Caco-2 (cell line): ENCODE measurements at regions of chr2 and their contacts with region 1.

Region 1: DNA sequence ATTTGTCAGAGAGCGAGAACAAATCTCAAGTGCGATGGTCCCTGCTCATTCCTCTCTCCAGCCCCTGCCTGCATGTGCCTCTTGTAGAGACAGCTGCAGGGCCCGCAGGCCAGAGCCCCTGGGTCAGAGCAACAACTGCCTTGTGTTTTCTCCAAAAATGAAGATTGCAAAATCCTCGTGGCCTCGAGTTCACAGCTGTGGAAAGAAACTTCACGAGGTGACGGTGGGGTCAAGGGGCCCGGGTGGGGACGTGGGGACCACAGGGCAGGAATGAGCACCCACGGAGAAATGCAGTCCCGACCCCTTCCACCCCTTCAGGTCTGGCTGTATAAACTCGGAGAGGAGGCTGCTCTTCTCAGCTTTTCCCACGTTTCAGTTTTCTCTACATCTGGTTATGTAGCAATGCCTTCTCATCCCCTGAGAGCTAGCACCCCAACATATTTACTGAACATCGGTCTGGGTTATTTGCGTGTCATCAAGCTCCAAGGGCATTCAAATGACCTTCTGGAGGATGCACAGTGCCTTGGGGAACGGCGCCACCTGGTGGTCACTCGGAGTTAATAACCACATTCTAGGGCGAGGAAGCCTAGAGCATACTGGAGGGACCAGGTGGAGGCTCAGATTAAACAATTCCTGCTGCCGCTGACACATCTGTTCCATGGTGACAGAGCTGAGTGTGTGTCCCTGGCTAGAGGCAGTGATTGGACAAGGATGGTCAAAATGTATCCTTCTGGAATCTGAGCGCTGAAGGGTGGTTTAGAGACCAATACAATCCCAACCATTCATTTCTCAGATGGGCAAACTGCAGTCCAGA is 91.4 kb upstream of the CYRIA start:
- DNase-seq: peak; percentile 67 to 80
- H3K4me3 ChIP-seq: no peak overlapping the region
- H3K4me3 Mint-ChIP-seq: no peak overlapping the region
- H3K27ac Mint-ChIP-seq: no peak overlapping the region
- H3K4me1 ChIP-seq: no peaks in the 10 kb centered on the region
- H3K4me1 Mint-ChIP-seq: peaks cover 5% of the 10 kb centered on the region
- H3K27me3 ChIP-seq: no peaks in the 10 kb centered on the region
- H3K27me3 Mint-ChIP-seq: peaks cover 17% of the 10 kb centered on the region
- CTCF ChIP-seq: peak; percentile 85 to 97

Region 2: DNA sequence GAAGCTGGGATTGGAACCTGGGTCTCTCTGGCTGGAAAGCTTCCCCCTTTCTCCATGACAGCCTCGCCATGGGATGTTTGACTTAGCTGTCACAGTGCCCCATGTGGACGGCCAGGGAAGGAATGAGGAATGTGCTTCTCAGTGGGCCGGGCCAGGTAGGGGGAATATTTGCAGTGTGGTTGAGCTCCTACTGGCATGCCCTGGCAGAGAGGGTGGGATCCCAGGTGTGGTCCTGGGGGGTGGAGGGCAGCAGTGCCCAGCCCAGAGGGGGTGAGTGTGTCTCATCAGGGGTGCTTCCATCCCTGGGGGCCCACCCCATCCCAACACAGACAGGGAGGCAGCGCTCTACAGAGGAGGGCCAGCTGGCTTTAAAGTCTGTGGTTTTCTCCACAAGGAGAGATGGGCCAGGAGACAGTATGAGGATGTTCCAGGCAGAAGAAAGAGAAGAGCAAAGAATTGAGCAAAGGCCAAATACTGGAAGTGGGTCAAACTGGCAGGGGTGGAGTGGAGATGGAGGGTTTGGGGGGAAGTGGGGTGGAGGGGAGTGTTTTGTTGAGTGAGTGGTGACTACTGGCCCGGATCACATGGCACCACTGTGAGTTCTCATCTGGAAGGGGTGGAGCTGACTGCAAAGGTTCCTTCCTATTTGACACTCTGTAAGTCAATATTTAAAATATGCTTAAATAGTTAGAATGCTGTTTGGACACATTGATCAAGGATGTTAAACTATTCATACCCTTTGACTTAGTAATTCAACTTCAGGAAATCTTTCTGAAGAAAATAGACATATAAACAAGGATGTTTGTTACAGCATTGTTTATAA is 722.7 kb before region 1 on chr2:
- CTCF ChIA-PET with region 1: no interaction called
- POLR2A ChIA-PET with region 1: no interaction called
- intact Hi-C with region 1: loop called (anchors 10 kb)
- DNase-seq: peak in 1 of 2 experiments; percentile 19
- H3K4me3 ChIP-seq: no peak overlapping the region
- H3K4me3 Mint-ChIP-seq: no peak overlapping the region
- H3K27ac Mint-ChIP-seq: no peak overlapping the region
- H3K4me1 ChIP-seq: 0 out of 2 replicates have a peak, but pooled peaks cover 6% of the 10 kb centered on the region
- H3K4me1 Mint-ChIP-seq: peaks cover 13% of the 10 kb centered on the region
- H3K27me3 ChIP-seq: no peaks in the 10 kb centered on the region
- H3K27me3 Mint-ChIP-seq: no peaks in the 10 kb centered on the region
- CTCF ChIP-seq: peak in 1 of 2 experiments; percentile 29

Region 3: DNA sequence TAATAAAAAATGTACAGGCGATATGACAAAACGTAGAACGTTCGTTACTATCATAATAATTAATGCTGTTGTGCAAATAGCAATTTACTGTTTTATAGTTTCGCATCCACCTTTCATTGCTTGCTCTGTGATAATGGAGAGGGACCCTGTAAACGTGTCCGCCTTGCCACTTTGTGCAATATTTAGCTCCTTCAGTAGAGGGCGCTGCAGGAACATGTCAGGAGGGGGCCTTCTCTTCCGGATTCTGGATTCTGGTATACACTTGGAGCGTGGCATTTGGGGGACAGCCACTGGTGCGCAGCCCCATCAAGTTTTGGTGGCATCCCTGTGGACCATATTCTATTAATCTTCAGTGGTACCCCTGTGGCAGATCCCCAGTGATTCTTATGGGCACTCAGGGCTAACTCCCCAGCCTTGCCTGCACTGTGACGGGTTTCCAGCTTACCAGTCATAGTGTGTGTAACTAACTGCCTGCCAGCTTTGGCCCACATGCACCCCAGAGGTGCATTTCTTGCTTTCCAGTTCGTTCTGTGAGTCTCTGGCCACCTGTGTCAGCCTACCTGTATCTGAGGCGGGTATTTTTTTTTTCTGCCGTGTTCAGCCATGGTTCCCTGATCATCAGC is 231.7 kb before region 1 on chr2:
- CTCF ChIA-PET with region 1: interaction called, 3 read pairs
- POLR2A ChIA-PET with region 1: no interaction called
- intact Hi-C with region 1: loop called (anchors 5 kb)
- DNase-seq: peak; percentile 62 to 68
- H3K4me3 ChIP-seq: no peak overlapping the region
- H3K4me3 Mint-ChIP-seq: no peak overlapping the region
- H3K27ac Mint-ChIP-seq: no peak overlapping the region
- H3K4me1 ChIP-seq: no peaks in the 10 kb centered on the region
- H3K4me1 Mint-ChIP-seq: no peaks in the 10 kb centered on the region
- H3K27me3 ChIP-seq: no peaks in the 10 kb centered on the region
- H3K27me3 Mint-ChIP-seq: peaks cover 13% of the 10 kb centered on the region
- CTCF ChIP-seq: peak; percentile 58 to 66

Region 4: DNA sequence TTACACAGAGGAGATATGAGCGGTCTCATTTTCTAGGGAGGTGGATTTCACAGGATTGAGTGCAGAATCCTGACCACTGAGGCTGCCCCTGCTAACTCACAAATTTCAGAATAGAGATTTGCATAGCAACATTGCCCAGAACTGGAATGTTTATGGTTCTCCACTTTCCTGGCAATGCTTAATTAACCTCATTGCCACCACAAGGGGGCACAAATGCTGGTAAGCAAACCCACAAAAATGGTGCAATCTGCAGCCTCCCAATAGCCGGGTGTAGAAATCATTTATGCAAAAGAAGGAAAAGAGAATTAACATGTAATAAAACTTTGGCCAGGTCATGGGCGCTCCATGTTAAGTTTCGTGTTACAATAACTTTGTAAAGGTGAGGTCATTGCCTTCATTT is 203.8 kb before region 1 on chr2:
- CTCF ChIA-PET with region 1: no interaction called
- POLR2A ChIA-PET with region 1: no interaction called
- intact Hi-C with region 1: loop called (anchors 2 kb)
- DNase-seq: peak; percentile 51 to 61
- H3K4me3 ChIP-seq: no peak overlapping the region
- H3K4me3 Mint-ChIP-seq: no peak overlapping the region
- H3K27ac Mint-ChIP-seq: no peak overlapping the region
- H3K4me1 ChIP-seq: no peaks in the 10 kb centered on the region
- H3K4me1 Mint-ChIP-seq: no peaks in the 10 kb centered on the region
- H3K27me3 ChIP-seq: no peaks in the 10 kb centered on the region
- H3K27me3 Mint-ChIP-seq: peaks cover 13% of the 10 kb centered on the region
- CTCF ChIP-seq: peak; percentile 63 to 68

Region 5: DNA sequence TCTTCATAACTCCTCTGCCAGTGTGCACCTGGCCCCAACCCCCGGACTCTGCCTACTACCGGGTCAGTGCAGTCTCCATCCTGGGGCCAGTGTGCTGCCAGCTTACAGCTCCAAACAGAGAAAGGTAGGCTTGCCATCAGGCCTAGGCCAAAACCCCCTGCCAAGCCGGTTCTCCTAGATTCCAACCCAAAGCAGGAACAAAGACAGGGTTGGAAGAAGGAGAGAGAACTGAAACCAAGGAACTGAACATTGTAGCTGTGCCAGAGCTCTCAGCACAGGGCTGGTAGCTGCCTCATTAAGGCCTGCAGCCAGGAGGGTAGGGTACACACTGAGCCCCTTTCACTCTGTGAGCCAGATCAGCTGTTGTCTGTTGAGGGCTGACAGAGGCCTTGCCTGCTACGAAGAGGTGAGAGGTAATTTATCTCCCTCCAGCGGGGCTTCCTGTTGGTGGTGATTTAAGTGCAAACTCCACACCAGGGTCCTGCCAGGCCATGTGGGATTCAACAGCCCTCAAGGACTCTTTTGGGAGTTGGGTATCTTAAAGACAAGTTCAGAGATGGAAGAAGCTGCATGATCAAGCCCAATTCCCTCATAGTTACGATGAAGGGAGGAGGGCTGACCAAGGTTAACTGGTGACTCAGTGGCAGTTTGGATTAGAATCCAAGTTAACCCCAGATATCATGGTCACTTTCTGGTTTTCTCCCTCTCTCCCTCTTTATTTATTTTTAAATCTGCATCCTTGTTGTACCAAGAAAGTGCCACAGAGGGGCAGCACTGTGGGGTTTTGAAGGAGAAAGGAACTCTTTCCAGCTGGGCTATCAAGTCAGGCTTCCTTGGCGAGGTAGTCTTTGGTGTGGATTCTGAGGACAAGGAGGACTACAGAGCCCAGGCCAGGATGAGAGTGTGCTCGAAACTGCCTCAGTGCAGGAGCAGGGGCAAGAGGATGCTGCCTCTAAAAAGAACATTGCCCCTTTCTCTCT is 139.5 kb before region 1 on chr2:
- CTCF ChIA-PET with region 1: interaction called, 67 read pairs
- POLR2A ChIA-PET with region 1: interaction called, 3 read pairs
- intact Hi-C with region 1: loop called (anchors 1 kb)
- DNase-seq: peak in 1 of 2 experiments; percentile 39
- H3K4me3 ChIP-seq: no peak overlapping the region
- H3K4me3 Mint-ChIP-seq: no peak overlapping the region
- H3K27ac Mint-ChIP-seq: no peak overlapping the region
- H3K4me1 ChIP-seq: no peaks in the 10 kb centered on the region
- H3K4me1 Mint-ChIP-seq: peaks cover 8% of the 10 kb centered on the region
- H3K27me3 ChIP-seq: no peaks in the 10 kb centered on the region
- H3K27me3 Mint-ChIP-seq: peaks cover 9% of the 10 kb centered on the region
- CTCF ChIP-seq: peak; percentile 10 to 30

Region 6: GRCh38 chr2:16650287-16651249 is 106.5 kb before region 1 on chr2:
- CTCF ChIA-PET with region 1: no interaction called
- POLR2A ChIA-PET with region 1: no interaction called
- intact Hi-C with region 1: no loop called
- DNase-seq: no peak
- H3K4me3 ChIP-seq: no peak overlapping the region
- H3K4me3 Mint-ChIP-seq: no peak overlapping the region
- H3K27ac Mint-ChIP-seq: no peak overlapping the region
- H3K4me1 ChIP-seq: 0 out of 2 replicates have a peak, but pooled peaks cover 4% of the 10 kb centered on the region
- H3K4me1 Mint-ChIP-seq: peaks cover 6% of the 10 kb centered on the region
- H3K27me3 ChIP-seq: no peaks in the 10 kb centered on the region
- H3K27me3 Mint-ChIP-seq: no peaks in the 10 kb centered on the region
- CTCF ChIP-seq: no peak

Region 7: GRCh38 chr2:16738361-16739225 is 18.4 kb before region 1 on chr2:
- CTCF ChIA-PET with region 1: no interaction called
- POLR2A ChIA-PET with region 1: no interaction called
- intact Hi-C with region 1: no loop called
- DNase-seq: no peak
- H3K4me3 ChIP-seq: no peak overlapping the region
- H3K4me3 Mint-ChIP-seq: no peak overlapping the region
- H3K27ac Mint-ChIP-seq: no peak overlapping the region
- H3K4me1 ChIP-seq: no peaks in the 10 kb centered on the region
- H3K4me1 Mint-ChIP-seq: no peaks in the 10 kb centered on the region
- H3K27me3 ChIP-seq: peaks cover 2% of the 10 kb centered on the region; the same call in 1 of the 2 replicates
- H3K27me3 Mint-ChIP-seq: peaks cover 8% of the 10 kb centered on the region
- CTCF ChIP-seq: no peak